CD8-positive, alpha-beta T cell (primary cell): ENCODE measurements at regions of chr6 and their contacts with region 1.

Region 1: DNA sequence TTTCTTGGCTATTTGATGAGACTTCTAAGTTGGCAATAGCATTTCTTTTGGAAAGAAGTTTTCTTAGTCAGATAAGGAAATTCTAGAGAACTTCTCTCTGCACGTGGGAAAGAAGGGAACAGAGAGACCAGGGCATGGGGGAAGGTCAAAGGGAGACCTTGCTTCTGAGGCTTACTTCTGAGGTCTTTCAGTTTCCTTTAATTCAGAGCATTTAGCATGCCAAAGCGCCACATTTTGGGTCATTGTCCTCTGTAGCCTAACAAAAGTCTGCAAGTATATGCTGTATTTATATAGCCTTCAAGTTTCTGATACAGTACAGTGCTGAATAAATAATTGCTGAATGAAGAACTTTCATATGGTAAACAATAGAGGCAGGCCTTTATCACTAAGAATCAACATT is 95.6 kb downstream of the SAMD3 start:
- DNase-seq: no peak
- ATAC-seq: no peak
- H3K4me3 ChIP-seq: no peak overlapping the region
- H3K4me3 Mint-ChIP-seq: no peak overlapping the region
- H3K27ac ChIP-seq: no peak overlapping the region
- H3K27ac Mint-ChIP-seq: peak overlapping the region; percentile 75
- H3K4me1 ChIP-seq: peaks cover 35% of the 10 kb centered on the region
- H3K4me1 Mint-ChIP-seq: peaks cover 64% of the 10 kb centered on the region
- H3K27me3 ChIP-seq: no peaks in the 10 kb centered on the region
- H3K27me3 Mint-ChIP-seq: no peaks in the 10 kb centered on the region
- CTCF ChIP-seq: no peak

Region 2: DNA sequence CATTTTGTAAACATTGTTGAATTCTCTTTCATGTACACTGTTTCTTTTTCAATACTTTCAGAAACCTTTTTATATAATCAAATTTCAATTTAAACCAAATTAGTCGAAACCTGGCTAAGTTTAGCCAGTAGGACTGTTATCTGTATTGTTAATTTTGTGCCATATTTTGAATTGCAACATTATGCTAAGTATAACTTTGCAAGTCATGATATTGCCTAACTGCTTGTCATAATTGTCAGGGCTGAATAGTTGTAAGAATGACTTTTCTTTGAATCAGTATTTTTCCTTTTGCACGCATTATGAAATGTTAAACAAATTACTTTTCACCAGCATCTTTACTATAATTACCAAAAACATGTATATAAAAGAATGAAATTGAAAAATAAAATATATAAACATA is 12.9 kb after region 1 on chr6:
- CTCF ChIA-PET with region 1: no interaction called
- POLR2A ChIA-PET with region 1: interaction called, 3 read pairs
- intact Hi-C with region 1: loop called in 1 of 2 experiments (anchors 2 kb)
- DNase-seq: no peak
- ATAC-seq: no peak
- H3K4me3 ChIP-seq: no peak overlapping the region
- H3K4me3 Mint-ChIP-seq: no peak overlapping the region
- H3K27ac ChIP-seq: no peak overlapping the region
- H3K27ac Mint-ChIP-seq: no peak overlapping the region
- H3K4me1 ChIP-seq: peaks cover 27% of the 10 kb centered on the region
- H3K4me1 Mint-ChIP-seq: peaks cover 54% of the 10 kb centered on the region
- H3K27me3 ChIP-seq: no peaks in the 10 kb centered on the region
- H3K27me3 Mint-ChIP-seq: no peaks in the 10 kb centered on the region
- CTCF ChIP-seq: no peak